ENCODE measurements at regions of chr18 and their contacts with region 1.

Region 1: GRCh38 chr18:35240664-35241447 is at the start of gene ZNF397:
- DNase-seq: peak; percentile 80 to 87
- H3K4me3 ChIP-seq: peak within 1 kb of the TSS; percentile 92
- H3K27ac ChIP-seq: peak within 1 kb of the TSS; percentile 67
- H3K4me1 ChIP-seq: no peaks in the 10 kb centered on the region; the same call in 1 of the 2 replicates
- H3K27me3 ChIP-seq: no peaks in the 10 kb centered on the region
- CTCF ChIP-seq: no peak
- total RNA-seq, gene ZNF397: 8.1 and 9.3 TPM in 2 replicates

Region 2: GRCh38 chr18:35343936-35344735 is 103.3 kb after region 1 on chr18 and contains the start of gene ZNF24:
- CTCF ChIA-PET with region 1: no interaction called
- POLR2A ChIA-PET with region 1: no interaction called
- intact Hi-C with region 1: loop called (anchors 10 kb)
- DNase-seq: peak; percentile 75 to 88
- H3K4me3 ChIP-seq: peak within 1 kb of the TSS; percentile 88
- H3K27ac ChIP-seq: peak within 1 kb of the TSS; percentile 72
- H3K4me1 ChIP-seq: 0 out of 2 replicates have a peak, but pooled peaks cover 4% of the 10 kb centered on the region
- H3K27me3 ChIP-seq: no peaks in the 10 kb centered on the region
- CTCF ChIP-seq: no peak
- total RNA-seq, gene ZNF24: 20.9 and 33.9 TPM in 2 replicates

Measured in PC-9 (cell line).